Lower leg skin (tissue), 4 donors: ENCODE measurements at regions of chr7 and their contacts with region 1.

Region 1: DNA sequence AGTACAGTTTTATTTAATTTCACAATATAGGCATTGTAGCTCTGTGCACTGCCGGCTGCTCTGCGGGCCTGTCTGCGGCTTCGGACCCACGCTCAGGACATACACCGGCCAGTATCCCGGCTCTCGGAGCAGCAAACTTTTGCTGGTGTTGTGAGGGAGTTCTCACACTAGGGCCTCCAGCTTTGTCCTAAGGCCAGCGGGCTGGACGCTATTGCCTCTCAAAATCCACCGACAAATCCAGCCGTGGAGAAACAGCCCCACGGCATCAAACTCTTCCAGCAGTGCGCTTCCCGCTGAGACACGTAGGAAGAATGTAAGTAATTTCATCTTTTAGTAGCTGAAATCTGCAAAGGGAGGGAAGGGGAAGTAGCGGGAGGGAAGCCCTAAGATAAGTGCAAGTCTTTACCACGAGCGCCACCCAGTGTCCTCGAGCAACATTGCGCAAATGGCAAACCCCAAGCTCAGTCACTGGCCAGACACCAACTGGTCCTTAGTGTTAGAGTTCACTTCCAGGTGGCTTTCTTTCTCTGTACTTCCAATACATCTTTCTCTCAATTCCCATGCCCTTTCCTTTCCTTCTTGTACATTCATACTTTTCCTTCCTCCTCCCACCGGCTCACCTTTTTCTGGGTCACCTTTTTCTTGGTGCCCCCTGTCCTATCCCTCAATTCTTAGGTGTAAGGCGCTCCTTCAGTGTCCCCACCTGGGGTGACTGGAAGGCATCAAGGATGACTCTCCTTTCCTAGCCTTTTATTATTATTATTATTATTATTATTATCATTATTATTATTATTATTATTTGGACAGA is 3.0 kb upstream of the DLX5 start:
- DNase-seq: peak; percentile 78 to 94
- H3K4me3 ChIP-seq: no peak overlapping the region
- CTCF ChIP-seq: peak in 1 of 3 donors; percentile 76
- POLR2A ChIP-seq: no peak

Region 2: GRCh38 chr7:96075510-96076349 is 951.9 kb before region 1 on chr7:
- intact Hi-C with region 1: loop called (anchors 10 kb)
- DNase-seq: peak; percentile 43 to 89
- H3K4me3 ChIP-seq: peak overlapping the region; percentile 13
- CTCF ChIP-seq: peak in 1 of 3 donors; percentile 73
- POLR2A ChIP-seq: no peak

Region 3: GRCh38 chr7:96414931-96415292 is 612.7 kb before region 1 on chr7:
- intact Hi-C with region 1: loop called (anchors 5 kb)
- DNase-seq: peak in 1 of 2 donors; percentile 42
- H3K4me3 ChIP-seq: no peak overlapping the region
- CTCF ChIP-seq: no peak
- POLR2A ChIP-seq: no peak